CD8-positive, alpha-beta T cell (primary cell): ENCODE measurements at regions of chrX and their contacts with region 1.

Region 1: DNA sequence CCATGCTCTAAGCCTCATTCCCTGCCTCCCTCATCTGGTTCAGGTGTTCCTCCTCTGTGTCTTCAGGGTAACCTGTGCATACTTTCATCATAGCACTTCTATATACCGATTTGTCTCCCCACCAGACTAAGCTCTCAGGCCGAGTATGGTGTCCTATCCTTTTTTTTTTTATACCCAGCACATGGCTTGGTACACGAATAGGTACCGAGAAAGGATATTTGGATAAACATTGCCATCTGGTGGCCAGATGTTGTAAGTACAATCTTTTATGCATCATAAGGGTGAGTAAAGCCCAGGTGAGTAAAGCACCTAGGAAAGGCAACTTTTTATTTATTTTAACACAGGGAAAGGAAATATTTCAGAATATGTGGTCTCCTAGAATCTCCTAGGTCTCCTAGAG is 68.4 kb downstream of the MID2 start:
- DNase-seq: peak in 4 of 9 experiments; percentile 0 to 68 (median 46)
- ATAC-seq: peak; percentile 71
- H3K4me3 ChIP-seq: no peak overlapping the region
- H3K4me3 Mint-ChIP-seq: no peak overlapping the region
- H3K27ac ChIP-seq: no peak overlapping the region
- H3K27ac Mint-ChIP-seq: no peak overlapping the region
- H3K4me1 ChIP-seq: no peaks in the 10 kb centered on the region
- H3K4me1 Mint-ChIP-seq: no peaks in the 10 kb centered on the region
- H3K27me3 ChIP-seq: no peaks in the 10 kb centered on the region
- H3K27me3 Mint-ChIP-seq: no peaks in the 10 kb centered on the region
- CTCF ChIP-seq: peak; percentile 63

Region 2: DNA sequence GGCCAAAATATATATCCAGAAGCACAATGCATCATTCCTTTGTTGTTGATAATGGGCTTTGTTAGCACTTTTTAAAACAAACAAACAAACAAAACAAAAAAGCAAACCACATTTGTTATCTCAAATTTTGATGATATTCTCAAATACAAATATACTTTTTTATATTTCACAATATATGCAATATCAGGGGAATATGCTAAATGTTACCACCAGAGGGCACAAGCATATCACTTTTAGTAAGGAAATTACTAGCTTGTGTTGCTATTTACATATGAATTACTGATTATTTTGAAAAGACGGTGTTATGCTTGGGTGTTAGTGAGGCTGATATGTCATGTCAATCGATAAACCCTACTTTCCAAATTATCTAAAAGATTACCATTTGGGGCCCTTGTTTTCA is 1020.0 kb before region 1 on chrX:
- CTCF ChIA-PET with region 1: no interaction called
- POLR2A ChIA-PET with region 1: no interaction called
- intact Hi-C with region 1: loop called in 1 of 2 experiments (anchors 2 kb)
- DNase-seq: peak in 2 of 9 experiments; percentile 24 to 42
- ATAC-seq: no peak
- H3K4me3 ChIP-seq: no peak overlapping the region
- H3K4me3 Mint-ChIP-seq: no peak overlapping the region
- H3K27ac ChIP-seq: no peak overlapping the region
- H3K27ac Mint-ChIP-seq: no peak overlapping the region
- H3K4me1 ChIP-seq: no peaks in the 10 kb centered on the region
- H3K4me1 Mint-ChIP-seq: no peaks in the 10 kb centered on the region
- H3K27me3 ChIP-seq: no peaks in the 10 kb centered on the region
- H3K27me3 Mint-ChIP-seq: no peaks in the 10 kb centered on the region
- CTCF ChIP-seq: peak; percentile 64

Region 3: GRCh38 chrX:106999002-106999975 is 894.7 kb before region 1 on chrX:
- CTCF ChIA-PET with region 1: no interaction called
- POLR2A ChIA-PET with region 1: no interaction called
- intact Hi-C with region 1: loop called in 1 of 2 experiments (anchors 2 kb)
- DNase-seq: peak in 8 of 9 experiments; percentile 7 to 64 (median 45)
- ATAC-seq: peak; percentile 61
- H3K4me3 ChIP-seq: peak overlapping the region; percentile 46 to 53
- H3K4me3 Mint-ChIP-seq: peak overlapping the region; percentile 83
- H3K27ac ChIP-seq: peak overlapping the region in 1 of 2 experiments; percentile 35
- H3K27ac Mint-ChIP-seq: peak overlapping the region; percentile 86
- H3K4me1 ChIP-seq: peaks cover 4% of the 10 kb centered on the region
- H3K4me1 Mint-ChIP-seq: peaks cover 11% of the 10 kb centered on the region
- H3K27me3 ChIP-seq: no peaks in the 10 kb centered on the region
- H3K27me3 Mint-ChIP-seq: peaks cover 3% of the 10 kb centered on the region
- CTCF ChIP-seq: no peak

Region 4: GRCh38 chrX:107171369-107172102 is 722.5 kb before region 1 on chrX:
- CTCF ChIA-PET with region 1: no interaction called
- POLR2A ChIA-PET with region 1: no interaction called
- intact Hi-C with region 1: no loop called
- DNase-seq: no peak
- ATAC-seq: no peak
- H3K4me3 ChIP-seq: no peak overlapping the region
- H3K4me3 Mint-ChIP-seq: no peak overlapping the region
- H3K27ac ChIP-seq: no peak overlapping the region
- H3K27ac Mint-ChIP-seq: no peak overlapping the region
- H3K4me1 ChIP-seq: no peaks in the 10 kb centered on the region
- H3K4me1 Mint-ChIP-seq: no peaks in the 10 kb centered on the region
- H3K27me3 ChIP-seq: no peaks in the 10 kb centered on the region
- H3K27me3 Mint-ChIP-seq: no peaks in the 10 kb centered on the region
- CTCF ChIP-seq: no peak

Region 5: DNA sequence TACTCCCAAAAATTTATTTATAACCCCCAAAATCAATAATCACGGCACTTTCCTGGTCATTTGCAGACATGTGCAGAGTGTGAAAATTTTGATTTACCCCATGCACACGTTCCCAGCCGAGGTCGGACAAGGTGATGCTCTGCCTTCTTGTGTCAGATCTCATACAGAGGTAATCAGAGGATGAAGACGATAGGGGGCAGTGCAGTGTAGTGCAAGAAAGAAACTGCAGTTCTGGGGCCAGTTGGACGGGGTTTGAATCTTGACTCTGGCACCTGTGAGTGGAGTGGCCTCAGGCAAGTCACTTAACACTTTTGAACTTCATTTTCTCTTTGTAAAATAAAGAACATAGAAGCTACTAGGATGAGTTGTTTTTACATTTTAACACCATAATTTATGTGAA is 356.2 kb before region 1 on chrX:
- CTCF ChIA-PET with region 1: no interaction called
- POLR2A ChIA-PET with region 1: no interaction called
- intact Hi-C with region 1: loop called in 1 of 2 experiments (anchors 5 kb)
- DNase-seq: peak in 4 of 9 experiments; percentile 25 to 51 (median 39)
- ATAC-seq: no peak
- H3K4me3 ChIP-seq: no peak overlapping the region
- H3K4me3 Mint-ChIP-seq: no peak overlapping the region
- H3K27ac ChIP-seq: no peak overlapping the region
- H3K27ac Mint-ChIP-seq: no peak overlapping the region
- H3K4me1 ChIP-seq: no peaks in the 10 kb centered on the region
- H3K4me1 Mint-ChIP-seq: no peaks in the 10 kb centered on the region
- H3K27me3 ChIP-seq: no peaks in the 10 kb centered on the region
- H3K27me3 Mint-ChIP-seq: peaks cover 9% of the 10 kb centered on the region
- CTCF ChIP-seq: no peak

Region 6: DNA sequence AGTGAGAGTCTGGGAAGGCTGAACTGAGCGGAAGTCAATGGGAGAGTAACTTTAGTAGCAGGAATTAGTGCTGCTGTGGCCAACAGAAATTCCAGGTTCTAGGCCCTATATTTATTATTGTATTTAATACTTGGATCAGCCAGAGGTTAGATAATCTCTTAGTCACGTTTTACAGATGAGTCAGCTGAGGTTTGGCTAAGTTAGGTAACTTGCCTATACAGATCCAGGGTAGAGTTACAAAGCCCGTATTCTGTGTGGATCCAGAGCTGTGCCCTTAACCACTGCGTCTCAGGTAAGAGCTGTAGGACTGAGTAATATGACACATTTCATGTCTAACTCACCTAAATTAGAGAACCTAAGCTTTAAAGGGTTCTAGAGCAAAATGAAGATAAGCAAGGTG is 176.9 kb after region 1 on chrX:
- CTCF ChIA-PET with region 1: no interaction called
- POLR2A ChIA-PET with region 1: no interaction called
- intact Hi-C with region 1: loop called in 1 of 2 experiments (anchors 5 kb)
- DNase-seq: no peak
- ATAC-seq: no peak
- H3K4me3 ChIP-seq: no peak overlapping the region
- H3K4me3 Mint-ChIP-seq: no peak overlapping the region
- H3K27ac ChIP-seq: no peak overlapping the region
- H3K27ac Mint-ChIP-seq: peak overlapping the region; percentile 2
- H3K4me1 ChIP-seq: no peaks in the 10 kb centered on the region
- H3K4me1 Mint-ChIP-seq: peaks cover 3% of the 10 kb centered on the region
- H3K27me3 ChIP-seq: no peaks in the 10 kb centered on the region
- H3K27me3 Mint-ChIP-seq: no peaks in the 10 kb centered on the region
- CTCF ChIP-seq: no peak